ENCODE measurements at regions of chr1 and their contacts with region 1.

Region 1: DNA sequence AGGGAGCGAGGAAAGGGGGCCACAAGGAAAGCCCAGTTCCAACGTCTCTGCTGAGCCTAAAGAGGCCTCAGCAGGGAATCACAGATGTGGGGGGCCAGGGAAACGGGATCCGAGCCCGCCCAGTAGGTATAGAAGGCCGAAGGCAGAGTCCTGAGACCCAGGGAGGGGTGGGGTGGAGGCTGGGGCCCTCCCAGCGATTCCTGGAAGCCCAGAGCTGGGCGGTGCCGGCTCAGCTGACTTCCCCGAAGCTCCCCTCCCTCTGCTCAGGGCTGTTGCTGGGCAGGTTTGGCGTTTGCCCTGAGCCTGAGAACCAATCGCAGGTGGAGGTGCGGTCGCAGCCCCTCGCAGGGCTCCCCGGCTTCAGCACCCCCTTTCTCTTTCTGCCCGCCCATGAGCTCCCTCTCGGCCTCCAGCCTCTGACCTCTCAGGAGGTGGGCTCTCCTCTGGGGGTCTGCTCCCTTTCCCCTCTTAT is 12.8 kb downstream of the ADAMTSL4 start:
- DNase-seq: peak; percentile 97
- H3K4me3 Mint-ChIP-seq: peak overlapping the region; percentile 99
- H3K27ac Mint-ChIP-seq: peak overlapping the region; percentile 100
- H3K4me1 Mint-ChIP-seq: peaks cover 55% of the 10 kb centered on the region
- H3K27me3 Mint-ChIP-seq: no peaks in the 10 kb centered on the region

Region 2: GRCh38 chr1:150259758-150260669 is 302.0 kb before region 1 on chr1:
- CTCF ChIA-PET with region 1: interaction called, 4 read pairs
- intact Hi-C with region 1: loop called (anchors 1 kb)
- DNase-seq: no peak
- H3K4me3 Mint-ChIP-seq: no peak overlapping the region
- H3K27ac Mint-ChIP-seq: no peak overlapping the region
- H3K4me1 Mint-ChIP-seq: peaks cover 22% of the 10 kb centered on the region
- H3K27me3 Mint-ChIP-seq: peaks cover 19% of the 10 kb centered on the region

Region 3: GRCh38 chr1:150509004-150509403 is 53.0 kb before region 1 on chr1:
- CTCF ChIA-PET with region 1: no interaction called
- intact Hi-C with region 1: no loop called
- DNase-seq: no peak
- H3K4me3 Mint-ChIP-seq: no peak overlapping the region
- H3K27ac Mint-ChIP-seq: no peak overlapping the region
- H3K4me1 Mint-ChIP-seq: no peaks in the 10 kb centered on the region
- H3K27me3 Mint-ChIP-seq: no peaks in the 10 kb centered on the region

Region 4: DNA sequence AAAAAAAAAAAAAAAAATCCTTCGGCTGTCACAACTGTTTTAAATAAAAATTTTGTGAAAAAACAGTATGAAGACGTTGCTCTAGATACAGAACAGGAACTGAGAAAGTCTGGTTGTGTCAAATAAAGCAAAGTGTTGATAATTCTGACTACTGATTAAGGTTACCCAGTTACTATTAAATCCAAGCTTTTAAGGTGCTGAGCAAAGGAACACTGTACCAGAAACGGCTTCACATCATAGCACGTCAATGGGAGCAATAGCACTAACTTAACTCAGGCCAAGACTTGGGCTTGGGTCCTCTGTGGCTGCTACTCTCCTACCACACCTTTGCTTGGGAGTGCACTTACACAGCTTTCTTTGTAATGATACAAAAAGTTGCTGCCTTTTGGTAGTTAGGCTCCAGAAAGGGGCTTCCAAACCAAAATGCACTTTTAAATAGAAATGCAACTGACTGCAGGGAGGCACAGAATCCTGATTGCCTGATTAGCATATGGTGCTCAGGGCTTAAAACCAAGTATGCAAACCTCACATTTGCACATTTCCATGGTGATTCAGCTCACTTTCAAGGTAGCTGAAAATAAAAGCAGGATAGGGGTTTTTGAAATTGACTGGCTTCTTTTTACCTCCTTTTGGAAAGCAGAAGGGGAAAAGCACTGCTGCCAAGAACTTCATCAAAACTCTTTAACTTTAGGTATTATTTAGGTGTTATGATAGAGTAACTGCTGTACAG is 11.1 kb after region 1 on chr1:
- CTCF ChIA-PET with region 1: interaction called, 156 read pairs
- intact Hi-C with region 1: loop called (anchors 1 kb)
- DNase-seq: no peak
- H3K4me3 Mint-ChIP-seq: peak overlapping the region; percentile 90
- H3K27ac Mint-ChIP-seq: peak overlapping the region; percentile 96
- H3K4me1 Mint-ChIP-seq: peaks cover 64% of the 10 kb centered on the region
- H3K27me3 Mint-ChIP-seq: no peaks in the 10 kb centered on the region

Region 5: DNA sequence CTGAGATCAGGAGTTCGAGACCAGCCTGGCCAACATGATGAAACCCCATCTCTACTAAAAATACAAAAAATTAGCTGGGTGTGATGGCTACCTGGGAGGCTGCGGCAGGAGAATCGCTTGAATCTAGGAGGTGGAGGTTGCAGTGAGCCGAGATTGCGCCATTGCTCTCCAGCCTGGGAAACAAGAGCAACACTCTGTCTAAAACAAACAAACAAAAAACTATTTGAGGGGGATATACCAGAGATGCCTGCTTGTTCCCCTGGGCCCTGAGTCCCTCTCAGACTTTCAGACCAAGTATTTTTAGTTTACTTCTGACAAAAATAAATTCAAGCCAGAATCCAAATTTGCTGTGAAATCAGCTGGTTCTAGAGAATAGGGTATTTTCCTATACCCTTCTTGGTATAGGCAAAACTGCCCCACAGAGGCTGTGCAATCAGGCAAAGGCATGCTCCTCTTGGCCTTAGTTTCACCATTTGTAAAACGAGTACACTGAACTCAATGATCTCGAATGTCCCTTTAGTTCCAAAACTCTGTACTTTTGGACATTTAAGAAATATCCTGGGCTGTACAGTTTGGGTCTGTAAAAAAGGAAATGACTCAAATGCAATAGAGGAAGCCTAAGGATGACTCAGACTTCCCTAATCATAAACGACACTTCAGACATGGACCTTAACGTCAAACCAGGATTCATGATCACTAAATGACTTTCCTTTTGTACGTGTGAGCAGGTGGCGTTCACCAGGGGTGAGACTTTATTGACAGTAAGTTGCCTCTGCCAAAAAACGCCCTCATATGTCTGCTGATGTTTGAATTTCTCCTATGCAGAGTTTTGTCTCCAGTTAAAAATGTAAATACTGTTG is 51.3 kb after region 1 on chr1:
- CTCF ChIA-PET with region 1: interaction called, 167 read pairs
- intact Hi-C with region 1: loop called (anchors 1 kb)
- DNase-seq: peak; percentile 81
- H3K4me3 Mint-ChIP-seq: peak overlapping the region; percentile 41
- H3K27ac Mint-ChIP-seq: peak overlapping the region; percentile 93
- H3K4me1 Mint-ChIP-seq: peaks cover 64% of the 10 kb centered on the region
- H3K27me3 Mint-ChIP-seq: no peaks in the 10 kb centered on the region

Region 6: GRCh38 chr1:150696590-150697524 is 134.8 kb after region 1 on chr1 and contains the start of gene GOLPH3L:
- CTCF ChIA-PET with region 1: interaction called, 4 read pairs
- intact Hi-C with region 1: loop called (anchors 1 kb)
- DNase-seq: peak; percentile 97
- H3K4me3 Mint-ChIP-seq: peak within 1 kb of the TSS; percentile 92
- H3K27ac Mint-ChIP-seq: peak within 1 kb of the TSS; percentile 82
- H3K4me1 Mint-ChIP-seq: peaks cover 23% of the 10 kb centered on the region
- H3K27me3 Mint-ChIP-seq: peaks cover 2% of the 10 kb centered on the region
- total RNA-seq, gene GOLPH3L: 17.1 to 18.2 TPM

Region 7: GRCh38 chr1:150925816-150926741 is 364.1 kb after region 1 on chr1 and contains the start of gene SETDB1:
- CTCF ChIA-PET with region 1: no interaction called
- intact Hi-C with region 1: loop called (anchors 1 kb)
- DNase-seq: peak; percentile 97
- H3K4me3 Mint-ChIP-seq: peak within 1 kb of the TSS; percentile 96
- H3K27ac Mint-ChIP-seq: peak within 1 kb of the TSS; percentile 96
- H3K4me1 Mint-ChIP-seq: peaks cover 25% of the 10 kb centered on the region
- H3K27me3 Mint-ChIP-seq: no peaks in the 10 kb centered on the region
- total RNA-seq, gene SETDB1: 40.4 to 44.7 TPM

Region 8: GRCh38 chr1:151059078-151059907 is 497.3 kb after region 1 on chr1 and contains the start of gene CDC42SE1:
- CTCF ChIA-PET with region 1: interaction called, 3 read pairs
- intact Hi-C with region 1: loop called (anchors 5 kb)
- DNase-seq: peak; percentile 86
- H3K4me3 Mint-ChIP-seq: peak within 1 kb of the TSS; percentile 86
- H3K27ac Mint-ChIP-seq: peak within 1 kb of the TSS; percentile 98
- H3K4me1 Mint-ChIP-seq: peaks cover 53% of the 10 kb centered on the region
- H3K27me3 Mint-ChIP-seq: no peaks in the 10 kb centered on the region
- total RNA-seq, gene CDC42SE1: 98.1 to 99.0 TPM